ENCODE measurements at regions of chr1 and their contacts with region 1.

Region 1: DNA sequence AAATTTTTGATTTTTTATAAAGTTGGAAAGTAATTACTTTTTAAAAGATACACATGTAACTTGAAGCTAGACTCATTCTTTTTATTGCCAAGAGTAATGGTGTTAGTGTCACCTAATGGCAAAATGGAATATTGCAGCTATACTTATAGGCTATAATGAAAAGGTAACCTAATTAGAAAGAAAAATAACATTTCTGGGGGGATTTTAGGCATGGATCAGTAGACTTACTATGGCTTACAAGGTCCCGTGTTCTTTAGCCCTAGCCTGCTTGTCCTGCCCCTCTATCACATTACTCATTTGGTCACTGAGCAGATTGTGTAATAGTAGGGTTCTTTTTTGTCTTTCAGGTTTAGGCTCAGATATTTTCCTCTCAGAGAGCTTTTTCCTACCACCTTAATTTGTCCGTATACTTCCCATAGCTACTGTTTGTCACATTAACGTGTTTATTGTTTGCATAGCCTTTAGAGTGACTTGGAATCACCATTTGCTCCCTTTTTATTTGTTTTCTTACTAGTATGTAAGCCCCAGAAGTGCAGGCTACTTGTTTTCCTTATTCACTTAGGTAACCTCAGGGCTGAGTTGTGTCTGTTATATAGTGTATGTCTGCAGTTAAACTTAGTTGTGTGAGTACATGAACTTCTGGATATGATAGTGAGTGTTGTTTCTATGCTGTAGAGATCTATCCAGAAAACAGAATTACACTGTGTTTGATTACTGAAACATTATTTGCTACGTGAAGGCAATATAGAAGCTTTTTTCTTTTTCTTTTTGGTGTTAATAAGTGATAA is 58.7 kb downstream of the RABGAP1L start:
- DNase-seq: peak; percentile 61
- H3K4me3 Mint-ChIP-seq: no peak overlapping the region
- H3K27ac Mint-ChIP-seq: no peak overlapping the region
- H3K4me1 Mint-ChIP-seq: peaks cover 6% of the 10 kb centered on the region
- H3K27me3 Mint-ChIP-seq: no peaks in the 10 kb centered on the region
- CTCF ChIP-seq: peak; percentile 90

Region 2: DNA sequence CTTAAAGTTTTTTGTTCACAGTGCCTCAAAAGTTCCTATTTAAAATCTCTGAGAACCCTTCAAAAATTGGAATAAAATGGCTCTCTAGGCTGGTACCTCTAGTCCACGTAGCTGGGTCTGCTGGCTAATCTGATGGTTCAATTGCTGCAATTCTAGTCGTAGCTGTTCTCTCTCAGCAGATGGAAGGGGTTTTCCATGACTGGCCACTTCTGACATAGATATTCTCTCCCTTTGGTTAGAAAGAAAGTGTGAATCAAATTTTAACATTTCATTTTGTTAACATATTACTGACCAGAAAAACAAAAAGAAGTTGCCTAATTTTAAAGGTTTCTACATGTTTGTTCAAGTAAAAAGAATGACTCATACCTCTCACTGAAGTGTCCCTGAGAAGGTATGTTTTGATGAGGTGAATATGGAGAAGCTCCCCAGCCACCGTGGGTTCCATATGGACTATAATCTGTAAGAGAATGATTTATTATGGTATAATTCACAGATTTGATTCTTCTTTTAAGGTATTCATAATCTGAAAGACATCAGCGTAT is 271.5 kb before region 1 on chr1:
- CTCF ChIA-PET with region 1: interaction called, 13 read pairs
- POLR2A ChIA-PET with region 1: interaction called, 3 read pairs
- intact Hi-C with region 1: no loop called
- DNase-seq: peak; percentile 82
- H3K4me3 Mint-ChIP-seq: no peak overlapping the region
- H3K27ac Mint-ChIP-seq: peak overlapping the region; percentile 90
- H3K4me1 Mint-ChIP-seq: peaks cover 15% of the 10 kb centered on the region
- H3K27me3 Mint-ChIP-seq: no peaks in the 10 kb centered on the region
- CTCF ChIP-seq: no peak

Region 3: GRCh38 chr1:174022080-174022975 is 195.7 kb before region 1 on chr1 and contains the start of gene RC3H1:
- CTCF ChIA-PET with region 1: interaction called, 3 read pairs
- POLR2A ChIA-PET with region 1: interaction called, 4 read pairs
- intact Hi-C with region 1: loop called (anchors 5 kb)
- DNase-seq: peak; percentile 95
- H3K4me3 Mint-ChIP-seq: peak within 1 kb of the TSS; percentile 82
- H3K27ac Mint-ChIP-seq: peak within 1 kb of the TSS; percentile 95
- H3K4me1 Mint-ChIP-seq: peaks cover 38% of the 10 kb centered on the region
- H3K27me3 Mint-ChIP-seq: no peaks in the 10 kb centered on the region
- CTCF ChIP-seq: no peak
- total RNA-seq, gene RC3H1: 25.7 and 26.9 TPM in 2 replicates

Region 4: GRCh38 chr1:174097426-174097825 is 120.6 kb before region 1 on chr1:
- CTCF ChIA-PET with region 1: interaction called, 20 read pairs
- POLR2A ChIA-PET with region 1: no interaction called
- intact Hi-C with region 1: loop called (anchors 1 kb)
- DNase-seq: no peak
- H3K4me3 Mint-ChIP-seq: no peak overlapping the region
- H3K27ac Mint-ChIP-seq: no peak overlapping the region
- H3K4me1 Mint-ChIP-seq: no peaks in the 10 kb centered on the region
- H3K27me3 Mint-ChIP-seq: no peaks in the 10 kb centered on the region
- CTCF ChIP-seq: no peak

Region 5: GRCh38 chr1:174153085-174153825 is 64.7 kb before region 1 on chr1:
- CTCF ChIA-PET with region 1: interaction called, 11 read pairs
- POLR2A ChIA-PET with region 1: interaction called, 4 read pairs
- intact Hi-C with region 1: loop called (anchors 1 kb)
- DNase-seq: peak; percentile 84
- H3K4me3 Mint-ChIP-seq: no peak overlapping the region
- H3K27ac Mint-ChIP-seq: peak overlapping the region; percentile 20
- H3K4me1 Mint-ChIP-seq: peaks cover 27% of the 10 kb centered on the region
- H3K27me3 Mint-ChIP-seq: no peaks in the 10 kb centered on the region
- CTCF ChIP-seq: no peak

Region 6: GRCh38 chr1:174204697-174205308 is 13.2 kb before region 1 on chr1:
- CTCF ChIA-PET with region 1: interaction called, 20 read pairs
- POLR2A ChIA-PET with region 1: interaction called, 4 read pairs
- intact Hi-C with region 1: no loop called
- DNase-seq: no peak
- H3K4me3 Mint-ChIP-seq: no peak overlapping the region
- H3K27ac Mint-ChIP-seq: no peak overlapping the region
- H3K4me1 Mint-ChIP-seq: no peaks in the 10 kb centered on the region
- H3K27me3 Mint-ChIP-seq: no peaks in the 10 kb centered on the region
- CTCF ChIP-seq: no peak

Region 7: DNA sequence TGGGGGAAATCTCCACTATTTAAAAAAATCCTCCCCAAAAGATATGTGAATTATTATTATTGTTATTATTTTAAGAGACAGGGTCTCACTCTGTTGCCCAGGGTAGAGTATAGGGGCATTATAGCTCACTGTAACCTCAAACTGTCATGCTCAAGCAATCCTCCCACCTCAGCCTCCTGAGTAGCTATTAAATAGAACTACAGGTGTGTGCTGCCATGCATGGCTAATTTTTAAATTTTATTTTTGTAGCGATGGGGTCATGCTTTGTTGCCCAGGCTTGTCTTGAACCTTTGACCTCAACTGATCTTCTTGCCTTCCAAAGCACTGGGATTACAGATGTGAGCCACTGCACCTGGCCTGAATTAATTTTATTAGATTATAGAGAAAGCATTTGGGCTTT is 58.1 kb after region 1 on chr1:
- CTCF ChIA-PET with region 1: no interaction called
- POLR2A ChIA-PET with region 1: no interaction called
- intact Hi-C with region 1: no loop called
- DNase-seq: no peak
- H3K4me3 Mint-ChIP-seq: no peak overlapping the region
- H3K27ac Mint-ChIP-seq: no peak overlapping the region
- H3K4me1 Mint-ChIP-seq: no peaks in the 10 kb centered on the region
- H3K27me3 Mint-ChIP-seq: no peaks in the 10 kb centered on the region
- CTCF ChIP-seq: no peak